Calu3 (cell line): ENCODE measurements at regions of chr22 and their contacts with region 1.

Region 1: GRCh38 chr22:50525390-50526068 is at the start of gene SCO2:
- DNase-seq: peak; percentile 98
- H3K4me3 Mint-ChIP-seq: peak within 1 kb of the TSS; percentile 85
- H3K27ac Mint-ChIP-seq: peak within 1 kb of the TSS; percentile 92
- H3K4me1 Mint-ChIP-seq: peaks cover 20% of the 10 kb centered on the region
- H3K27me3 Mint-ChIP-seq: no peaks in the 10 kb centered on the region
- CTCF ChIP-seq: peak; percentile 55
- total RNA-seq, gene SCO2: 3.6 and 5.3 TPM in 2 replicates

Region 2: DNA sequence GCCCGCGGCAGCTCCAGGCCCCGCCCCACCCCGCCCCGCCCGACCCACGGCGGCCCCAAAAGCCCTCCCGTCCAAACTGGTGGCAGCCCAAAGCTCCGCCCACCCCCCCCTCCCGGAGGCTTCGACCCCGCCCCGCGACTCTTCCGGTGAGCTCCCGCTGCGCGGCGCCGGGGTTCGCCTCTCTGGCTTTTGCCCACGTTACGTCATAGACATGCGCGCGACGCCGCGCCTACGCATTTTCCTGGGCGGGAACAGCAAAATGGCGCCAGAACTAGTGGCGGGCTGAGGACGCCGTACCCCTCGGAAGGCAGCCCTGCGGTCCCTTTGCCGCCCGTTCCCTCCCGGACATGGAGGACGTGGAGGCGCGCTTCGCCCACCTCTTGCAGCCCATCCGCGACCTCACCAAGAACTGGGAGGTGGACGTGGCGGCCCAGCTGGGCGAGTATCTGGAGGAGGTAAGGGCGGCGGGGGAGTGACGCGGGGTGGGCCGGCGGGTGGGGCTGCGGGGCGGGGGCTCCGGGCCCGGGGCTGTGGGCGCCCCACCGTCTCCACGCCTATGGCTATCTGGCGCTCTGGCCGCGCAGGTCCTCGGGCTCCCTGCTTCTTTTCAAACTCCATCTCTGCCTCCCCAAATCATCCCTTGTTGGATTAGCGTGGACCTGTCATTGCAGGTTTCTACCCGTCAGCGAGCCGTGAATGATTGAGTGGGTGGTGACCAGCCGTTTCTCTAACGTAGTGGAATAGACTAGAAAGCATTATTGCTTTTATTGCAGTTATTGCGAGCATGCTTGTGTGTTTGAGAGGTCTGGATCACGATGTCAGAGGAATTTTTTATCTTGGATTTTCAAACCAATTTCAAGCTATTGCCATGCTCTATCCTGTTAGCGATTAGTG is 17.3 kb before region 1 on chr22 and contains the start of gene NCAPH2:
- CTCF ChIA-PET with region 1: interaction called, 13 read pairs
- intact Hi-C with region 1: no loop called
- DNase-seq: peak; percentile 96
- H3K4me3 Mint-ChIP-seq: peak within 1 kb of the TSS; percentile 91
- H3K27ac Mint-ChIP-seq: peak within 1 kb of the TSS; percentile 91
- H3K4me1 Mint-ChIP-seq: peaks cover 17% of the 10 kb centered on the region
- H3K27me3 Mint-ChIP-seq: no peaks in the 10 kb centered on the region
- CTCF ChIP-seq: no peak
- total RNA-seq, gene NCAPH2: 73.2 and 92.0 TPM in 2 replicates

Region 3: GRCh38 chr22:50562523-50563412 is 37.2 kb after region 1 on chr22 and contains the start of gene SYCE3:
- CTCF ChIA-PET with region 1: interaction called, 19 read pairs
- intact Hi-C with region 1: no loop called
- DNase-seq: peak; percentile 99
- H3K4me3 Mint-ChIP-seq: peak within 1 kb of the TSS; percentile 92
- H3K27ac Mint-ChIP-seq: peak within 1 kb of the TSS; percentile 80
- H3K4me1 Mint-ChIP-seq: peaks cover 9% of the 10 kb centered on the region
- H3K27me3 Mint-ChIP-seq: no peaks in the 10 kb centered on the region
- CTCF ChIP-seq: peak; percentile 95
- total RNA-seq, gene SYCE3: not detected in 2 replicates